HEK293 (cell line): ENCODE measurements at regions of chr5 and their contacts with region 1.

Region 1: DNA sequence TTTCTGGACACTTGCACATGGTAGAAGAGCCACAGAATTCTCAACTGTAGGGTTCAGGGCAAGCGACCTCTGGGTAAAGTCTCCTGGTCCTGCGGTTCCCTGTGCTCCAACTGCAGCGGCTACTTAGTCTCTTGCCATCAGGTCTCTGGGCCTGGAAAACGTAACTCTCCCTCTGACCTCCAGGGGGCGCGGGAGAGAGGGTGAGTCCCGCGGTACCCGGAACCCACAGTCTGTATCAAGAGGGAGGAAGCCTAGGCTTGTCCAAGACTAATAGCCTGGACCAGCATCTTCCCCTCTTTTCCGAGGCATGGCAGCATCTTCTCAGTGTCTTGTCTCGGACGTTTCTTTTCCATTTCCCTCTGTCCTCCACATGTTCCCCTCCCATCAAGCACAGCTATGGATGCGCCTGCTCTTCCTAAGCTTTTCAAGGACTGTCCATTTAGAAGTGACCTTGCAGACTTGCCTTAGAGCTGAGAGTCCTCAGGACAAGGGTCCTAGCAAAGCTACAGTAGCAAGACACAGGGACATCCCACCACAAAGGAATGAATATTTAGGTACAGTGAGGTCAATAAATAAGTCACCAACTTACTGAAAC is 59.3 kb downstream of the FSTL4 start:
- H3K4me3 ChIP-seq: no peak overlapping the region
- H3K27ac ChIP-seq: no peak overlapping the region
- H3K4me1 ChIP-seq: no peaks in the 10 kb centered on the region
- CTCF ChIP-seq: peak; percentile 41; the same call in 1 of the 2 replicates

Region 2: GRCh38 chr5:133569347-133569746 is 16.3 kb after region 1 on chr5:
- CTCF ChIA-PET with region 1: interaction called, 12 read pairs
- POLR2A ChIA-PET with region 1: no interaction called
- H3K4me3 ChIP-seq: no peak overlapping the region
- H3K27ac ChIP-seq: no peak overlapping the region
- H3K4me1 ChIP-seq: no peaks in the 10 kb centered on the region
- CTCF ChIP-seq: no peak

Region 3: GRCh38 chr5:133610489-133611356 is 57.7 kb after region 1 on chr5:
- CTCF ChIA-PET with region 1: interaction called, 11 read pairs
- POLR2A ChIA-PET with region 1: no interaction called
- H3K4me3 ChIP-seq: peak overlapping the region; percentile 35
- H3K27ac ChIP-seq: no peak overlapping the region; the same call in 1 of the 2 replicates
- H3K4me1 ChIP-seq: peaks cover 12% of the 10 kb centered on the region
- CTCF ChIP-seq: peak; percentile 55

Region 4: DNA sequence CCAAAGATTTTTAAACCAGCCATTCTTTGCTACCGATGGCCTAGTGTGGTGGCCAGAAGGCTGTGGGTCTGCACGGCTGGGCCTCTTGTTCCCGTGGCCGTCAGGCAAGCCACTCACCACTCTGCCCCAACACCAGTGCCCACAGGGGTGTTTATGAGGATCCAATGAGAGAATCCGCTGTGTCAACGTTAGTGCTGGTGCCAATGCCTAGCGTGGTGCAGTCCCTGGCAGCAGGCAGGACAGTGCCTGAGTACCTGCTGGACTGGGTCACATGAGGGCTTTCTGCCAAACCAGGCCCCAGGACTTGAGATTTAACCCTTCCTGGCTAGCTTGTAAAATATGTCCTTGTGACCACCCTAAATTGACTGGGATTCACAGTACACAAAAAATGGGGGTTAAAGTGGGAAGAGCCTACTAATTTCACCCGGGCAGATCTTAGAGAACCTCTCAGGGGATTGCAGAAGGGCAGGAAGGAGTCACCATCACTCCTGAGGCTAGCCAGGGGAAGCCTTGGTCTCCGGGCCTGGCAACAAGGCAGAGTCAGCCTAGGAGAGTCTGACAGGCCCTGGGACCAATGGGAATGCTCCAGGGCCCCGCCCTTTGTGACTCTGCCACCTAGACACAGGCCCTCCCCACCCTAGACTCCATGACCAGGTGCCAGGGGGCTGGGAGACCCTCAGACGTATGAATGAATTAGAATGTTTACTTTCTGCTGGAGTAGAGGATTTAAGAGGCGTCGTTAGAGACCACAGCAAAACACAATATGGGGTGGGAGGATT is 122.5 kb after region 1 on chr5:
- CTCF ChIA-PET with region 1: no interaction called
- POLR2A ChIA-PET with region 1: no interaction called
- H3K4me3 ChIP-seq: no peak overlapping the region
- H3K27ac ChIP-seq: no peak overlapping the region
- H3K4me1 ChIP-seq: no peaks in the 10 kb centered on the region
- CTCF ChIP-seq: no peak